ENCODE measurements at regions of chr3 and their contacts with region 1.

Region 1: GRCh38 chr3:127590593-127591477 is at the start of gene TPRA1:
- DNase-seq: peak; percentile 70 to 91
- ATAC-seq: peak; percentile 82 to 91 (median 84)
- H3K4me3 ChIP-seq: peak within 1 kb of the TSS; percentile 59
- H3K4me3 Mint-ChIP-seq: peak within 1 kb of the TSS; percentile 98
- H3K27ac ChIP-seq: peak within 1 kb of the TSS; percentile 61
- H3K27ac Mint-ChIP-seq: peak within 1 kb of the TSS; percentile 78 to 87
- H3K4me1 ChIP-seq: peaks cover 29% of the 10 kb centered on the region
- H3K4me1 Mint-ChIP-seq: peaks cover 23 to 35% of the 10 kb centered on the region in 2 donors
- H3K27me3 ChIP-seq: no peaks in the 10 kb centered on the region
- H3K27me3 Mint-ChIP-seq: no peaks in the 10 kb centered on the region
- CTCF ChIP-seq: no peak
- total RNA-seq, gene TPRA1: 15.4 to 22.7 (median 22.1) TPM

Region 2: DNA sequence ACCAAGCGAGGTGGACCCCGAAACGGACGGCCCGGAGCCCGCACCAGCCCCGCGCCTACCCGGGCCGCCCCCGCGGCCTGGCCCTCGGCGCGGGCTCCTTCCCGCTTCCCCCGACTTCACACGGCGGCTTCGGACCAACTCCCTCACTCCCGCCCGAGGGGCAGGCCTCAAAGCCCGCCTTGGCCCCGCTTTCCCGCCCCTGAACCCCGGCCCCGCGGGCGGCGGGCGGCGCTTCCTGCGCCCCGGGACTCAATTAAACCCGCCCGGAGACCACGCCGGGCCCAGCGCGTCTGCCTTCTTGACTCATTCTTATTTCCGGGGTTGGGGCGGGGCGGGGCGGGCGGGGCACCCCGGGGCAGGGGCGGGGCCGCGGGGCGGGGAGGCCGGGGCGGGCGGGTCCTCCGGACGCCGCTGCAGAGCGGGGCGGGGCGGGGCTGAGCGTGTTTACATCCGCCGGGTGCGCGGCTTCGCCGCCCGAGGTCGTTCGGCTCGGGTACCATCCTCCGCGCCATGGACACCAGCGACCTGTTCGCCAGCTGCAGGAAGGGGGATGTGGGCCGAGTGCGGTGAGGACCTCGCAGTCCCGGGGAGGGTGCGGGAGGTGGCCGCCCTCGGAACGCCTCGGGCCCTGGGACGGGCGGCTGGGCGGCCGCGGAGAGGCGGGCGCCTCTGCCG is 81.8 kb after region 1 on chr3 and contains the start of gene ABTB1:
- intact Hi-C with region 1: loop called (anchors 2 kb)
- DNase-seq: peak; percentile 81 to 91
- ATAC-seq: peak; percentile 87 to 95 (median 88)
- H3K4me3 ChIP-seq: peak within 1 kb of the TSS; percentile 74
- H3K4me3 Mint-ChIP-seq: peak within 1 kb of the TSS; percentile 92
- H3K27ac ChIP-seq: peak within 1 kb of the TSS; percentile 86
- H3K27ac Mint-ChIP-seq: peak within 1 kb of the TSS; percentile 89 to 96
- H3K4me1 ChIP-seq: peaks cover 27% of the 10 kb centered on the region
- H3K4me1 Mint-ChIP-seq: peaks cover 22 to 38% of the 10 kb centered on the region in 2 donors
- H3K27me3 ChIP-seq: no peaks in the 10 kb centered on the region
- H3K27me3 Mint-ChIP-seq: no peaks in the 10 kb centered on the region
- CTCF ChIP-seq: no peak
- total RNA-seq, gene ABTB1: 98.8 to 127 (median 107) TPM